Right ventricle myocardium inferior (tissue), 1 donor: ENCODE measurements at regions of chr1 and their contacts with region 1.

Region 1: DNA sequence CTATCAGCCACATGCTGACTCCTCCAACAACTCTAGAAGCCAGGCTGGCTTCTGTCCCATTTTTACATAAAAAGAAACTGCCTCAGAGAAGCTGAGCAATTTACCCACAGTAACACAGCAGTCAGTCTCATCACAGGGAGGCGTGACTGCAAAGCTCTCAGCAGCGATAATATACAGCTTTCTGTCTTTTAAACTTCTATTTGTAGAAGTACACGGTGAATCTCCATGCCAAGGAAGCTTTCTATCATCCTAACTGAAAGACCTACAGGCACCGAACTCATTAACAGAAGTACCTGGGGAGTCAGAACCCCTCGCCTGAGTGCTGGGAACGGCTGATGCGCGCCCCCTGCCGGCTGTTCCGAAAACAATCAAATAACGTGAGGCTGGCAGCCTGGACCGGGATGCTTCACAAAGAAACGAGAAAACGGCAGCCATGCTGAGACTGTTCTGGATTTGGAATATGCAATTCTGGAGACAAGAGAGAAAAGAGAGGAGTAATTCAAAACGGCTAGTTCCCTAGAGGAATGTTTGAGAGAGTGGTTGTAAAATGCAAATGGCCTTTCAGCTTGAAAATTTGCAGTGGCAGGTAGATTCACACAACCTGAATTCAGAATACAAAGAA is 43.5 kb upstream of the RAB4A start:
- DNase-seq: peak; percentile 92
- ATAC-seq: no peak

Region 2: DNA sequence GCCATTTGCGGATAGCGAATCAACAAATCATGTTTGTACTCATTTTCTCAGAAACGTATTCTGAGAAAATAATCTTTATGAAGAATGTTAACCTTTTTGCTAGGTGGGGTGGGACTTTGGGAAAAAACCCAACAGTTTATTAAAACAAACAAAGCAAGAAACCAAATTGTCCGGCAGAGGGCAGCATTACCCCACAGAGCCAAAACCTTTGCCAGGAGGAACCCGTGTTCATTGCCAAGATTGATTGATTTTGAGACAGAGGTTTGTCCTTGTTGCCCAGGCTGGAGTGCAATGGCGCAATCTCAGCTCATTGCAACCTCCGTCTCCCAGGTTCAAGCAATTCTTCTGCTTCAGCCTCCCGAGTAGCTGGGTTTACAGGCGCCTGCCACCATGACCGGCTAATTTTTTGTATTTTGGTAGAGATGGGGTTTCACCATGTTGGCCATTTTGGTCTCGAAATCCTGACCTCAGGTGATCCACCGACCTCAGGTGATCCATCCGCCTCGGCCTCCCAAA is 563.0 kb before region 1 on chr1:
- intact Hi-C with region 1: loop called (anchors 1 kb)
- DNase-seq: no peak
- ATAC-seq: peak; percentile 43

Region 3: GRCh38 chr1:228691926-228692325 is 535.5 kb before region 1 on chr1:
- intact Hi-C with region 1: loop called (anchors 2 kb)
- DNase-seq: no peak
- ATAC-seq: no peak

Region 4: DNA sequence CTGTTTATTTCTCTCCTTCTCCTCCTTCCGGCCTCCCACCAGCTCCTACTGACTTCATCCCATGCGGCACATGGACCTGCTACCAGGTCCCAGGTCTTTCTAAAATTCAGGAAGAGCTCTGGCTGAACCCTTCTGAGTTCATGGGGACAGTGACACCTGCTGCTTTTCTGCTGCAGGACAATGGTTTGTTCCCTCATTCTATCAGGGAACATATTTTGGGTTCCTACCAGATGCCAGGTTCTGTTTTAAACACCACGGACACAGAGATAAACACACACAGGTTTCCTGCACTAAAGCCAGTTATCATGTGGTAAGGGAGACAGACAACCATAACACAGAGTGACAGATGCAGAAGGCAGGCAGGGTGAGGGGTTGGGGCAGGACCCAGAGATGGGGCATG is 70.5 kb before region 1 on chr1:
- intact Hi-C with region 1: loop called (anchors 5 kb)
- DNase-seq: no peak
- ATAC-seq: peak; percentile 83

Region 5: DNA sequence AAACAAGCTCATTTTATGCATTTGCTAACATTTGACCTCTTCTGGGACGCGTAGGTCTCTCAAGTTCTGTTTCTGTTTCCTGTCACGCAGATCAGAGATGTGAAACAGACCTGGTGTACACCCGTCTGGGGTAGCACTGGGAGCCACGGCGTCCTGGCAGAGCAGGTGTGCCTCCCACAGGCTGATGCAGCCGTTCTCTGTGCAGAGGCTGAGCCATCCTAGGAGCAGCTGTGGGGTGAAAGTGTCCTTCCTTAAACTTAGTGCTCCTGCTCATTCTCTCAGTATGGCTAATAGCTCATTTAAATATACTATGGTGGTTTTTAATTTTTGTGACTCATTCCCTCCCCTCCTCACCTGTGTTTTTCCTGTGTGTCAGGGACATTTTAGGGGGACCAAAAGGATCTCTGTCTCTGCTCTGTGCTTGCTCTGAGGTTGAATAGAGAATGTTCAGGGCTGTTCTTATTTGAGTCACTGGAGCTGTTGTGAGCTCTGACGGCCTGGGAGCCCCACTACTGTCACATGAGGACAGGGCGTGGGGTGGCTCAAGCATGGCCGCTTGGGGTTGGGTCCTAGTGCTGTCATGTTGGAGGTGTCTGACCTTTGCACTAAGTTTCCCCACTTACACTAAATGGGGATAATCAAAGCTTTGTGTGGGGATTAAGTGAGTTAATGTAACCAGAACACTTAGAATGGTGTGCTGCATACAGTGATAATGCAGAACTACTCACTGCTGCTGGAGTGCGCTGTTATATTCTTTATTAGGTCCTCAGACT is 882.7 kb after region 1 on chr1:
- intact Hi-C with region 1: no loop called
- DNase-seq: no peak
- ATAC-seq: no peak